HEK293 (cell line): ENCODE measurements at regions of chr9 and their contacts with region 1.

Region 1: GRCh38 chr9:108272349-108272899 is 583.4 kb downstream of the ACTL7B start:
- H3K4me3 ChIP-seq: peak overlapping the region; percentile 27
- H3K27ac ChIP-seq: peak overlapping the region; percentile 58
- H3K4me1 ChIP-seq: peaks cover 12% of the 10 kb centered on the region
- CTCF ChIP-seq: peak; percentile 54; the same call in 1 of the 2 replicates

Region 2: DNA sequence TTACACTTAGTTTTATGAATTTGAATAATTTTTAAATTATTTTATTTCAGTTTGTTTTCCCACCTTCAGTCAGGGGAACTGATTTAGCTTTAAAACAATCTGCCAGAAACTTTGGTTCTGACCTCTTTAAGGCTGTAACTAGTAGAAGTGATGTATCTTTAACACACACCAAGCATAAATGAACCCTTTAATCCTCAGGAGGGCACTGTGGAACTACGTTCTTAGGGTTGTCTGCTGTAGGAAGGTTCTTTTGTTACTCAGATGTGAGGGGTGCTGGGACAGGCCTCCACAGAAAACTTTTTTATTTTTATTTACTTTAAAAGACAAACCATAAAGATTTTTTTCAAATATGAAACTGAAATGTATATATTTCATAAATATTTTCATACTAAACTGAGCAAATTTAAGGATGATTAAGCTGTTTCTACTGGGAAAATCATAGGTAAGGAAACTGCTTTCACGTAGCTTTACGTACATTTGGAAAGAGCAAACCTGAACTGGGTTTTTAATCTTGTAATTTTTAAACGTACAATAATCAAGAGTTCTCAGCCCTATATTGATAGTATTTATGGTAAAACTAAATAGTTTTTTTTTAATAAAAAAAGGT is 788.2 kb before region 1 on chr9:
- CTCF ChIA-PET with region 1: interaction called, 14 read pairs
- POLR2A ChIA-PET with region 1: no interaction called
- H3K4me3 ChIP-seq: no peak overlapping the region
- H3K27ac ChIP-seq: no peak overlapping the region
- H3K4me1 ChIP-seq: peaks cover 4% of the 10 kb centered on the region; the same call in 1 of the 2 replicates
- CTCF ChIP-seq: no peak

Region 3: DNA sequence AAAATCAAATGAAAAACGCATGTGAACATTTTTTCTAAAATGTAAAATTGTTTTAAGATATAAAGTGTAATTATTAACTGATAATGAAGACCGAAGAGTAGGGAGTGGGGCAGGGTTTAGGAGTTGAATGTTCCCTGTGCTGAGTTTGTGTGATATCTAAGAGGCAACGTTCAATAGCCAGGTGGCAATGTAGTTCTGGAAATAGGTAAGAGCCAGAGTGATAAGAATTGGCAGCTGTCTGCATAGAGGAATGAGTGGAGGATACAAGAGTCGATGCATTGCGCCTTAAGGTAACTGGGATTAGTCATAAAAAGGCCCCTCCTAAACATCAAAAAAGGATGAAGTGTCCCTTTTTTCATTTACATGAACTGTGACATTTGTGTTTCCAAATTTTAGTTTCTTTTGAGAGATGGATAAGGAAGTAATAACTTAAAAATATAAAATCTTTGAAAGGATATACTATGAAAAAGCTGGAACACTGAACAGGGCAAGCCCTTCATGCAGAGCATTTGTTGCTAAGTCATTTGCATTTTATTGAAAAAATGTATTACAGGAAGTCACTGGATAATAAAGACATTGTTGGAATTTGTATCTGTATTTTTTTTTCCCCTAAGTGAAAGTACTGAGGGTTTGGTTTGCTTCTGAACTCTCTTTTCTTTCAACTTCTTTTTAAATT is 76.0 kb before region 1 on chr9:
- CTCF ChIA-PET with region 1: no interaction called
- POLR2A ChIA-PET with region 1: no interaction called
- H3K4me3 ChIP-seq: no peak overlapping the region
- H3K27ac ChIP-seq: no peak overlapping the region
- H3K4me1 ChIP-seq: no peaks in the 10 kb centered on the region
- CTCF ChIP-seq: no peak